GM12878 (cell line): ENCODE measurements at regions of chr7 and their contacts with region 1.

Region 1: GRCh38 chr7:137789215-137789882 is 57.4 kb downstream of the DGKI start:
- DNase-seq: no peak
- ATAC-seq: no peak
- H3K4me3 ChIP-seq: no peak overlapping the region
- H3K27ac ChIP-seq: no peak overlapping the region
- H3K4me1 ChIP-seq: no peaks in the 10 kb centered on the region
- H3K27me3 ChIP-seq: no peaks in the 10 kb centered on the region
- CTCF ChIP-seq: no peak
- EP300 ChIP-seq: no peak
- POLR2A ChIP-seq: no peak
- RAD21 ChIP-seq: no peak

Region 2: DNA sequence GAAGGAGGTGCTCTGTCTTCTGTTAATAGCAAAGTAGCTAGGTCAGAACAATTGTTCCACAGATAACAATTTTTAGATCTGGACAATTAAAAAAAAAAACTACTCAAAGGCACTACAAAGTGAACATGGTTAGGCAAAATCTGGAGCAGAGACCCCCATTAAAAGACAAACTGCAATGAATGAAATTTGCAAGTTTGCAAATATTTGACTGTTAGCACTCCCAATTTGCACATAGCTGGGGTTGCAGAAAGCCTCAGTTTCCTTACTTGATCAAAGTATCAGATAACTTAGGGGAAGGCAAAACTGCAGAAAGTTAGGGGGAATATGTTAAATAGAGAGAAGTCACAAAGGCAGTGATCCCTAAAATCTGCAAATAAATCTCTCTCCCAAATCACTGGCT is 10.8 kb before region 1 on chr7:
- CTCF ChIA-PET with region 1: interaction called, 9 read pairs
- POLR2A ChIA-PET with region 1: interaction called, 8 read pairs
- RAD21 ChIA-PET with region 1: interaction called, 7 read pairs
- SMC1A ChIA-PET with region 1: interaction called, 26 read pairs
- in situ Hi-C with region 1: no loop called
- intact Hi-C with region 1: no loop called
- DNase-seq: no peak
- ATAC-seq: no peak
- H3K4me3 ChIP-seq: no peak overlapping the region
- H3K27ac ChIP-seq: no peak overlapping the region
- H3K4me1 ChIP-seq: no peaks in the 10 kb centered on the region
- H3K27me3 ChIP-seq: no peaks in the 10 kb centered on the region
- CTCF ChIP-seq: no peak
- EP300 ChIP-seq: no peak
- POLR2A ChIP-seq: no peak
- RAD21 ChIP-seq: no peak

Region 3: DNA sequence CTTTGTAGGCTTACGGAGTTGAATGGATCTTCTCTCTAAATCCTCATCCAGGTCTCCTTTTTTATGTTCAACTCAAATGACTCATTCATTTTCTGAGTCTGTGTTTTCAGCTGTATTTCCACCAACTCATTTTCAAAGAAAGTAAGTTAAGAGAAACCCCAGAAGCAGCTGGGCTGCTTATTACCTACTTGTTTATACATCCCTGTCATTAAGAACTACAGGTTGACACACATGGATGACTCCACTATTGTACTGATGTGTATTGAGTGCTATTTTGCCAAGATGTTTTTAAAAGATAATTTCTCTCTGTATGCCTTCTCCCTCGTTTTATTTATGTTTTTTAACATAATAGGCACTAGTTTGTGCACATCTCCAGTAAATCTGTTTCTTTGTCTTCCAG is 15.5 kb after region 1 on chr7:
- CTCF ChIA-PET with region 1: interaction called, 6 read pairs
- POLR2A ChIA-PET with region 1: no interaction called
- RAD21 ChIA-PET with region 1: interaction called, 3 read pairs
- SMC1A ChIA-PET with region 1: interaction called, 11 read pairs
- in situ Hi-C with region 1: no loop called
- intact Hi-C with region 1: no loop called
- DNase-seq: no peak
- ATAC-seq: peak; percentile 67
- H3K4me3 ChIP-seq: no peak overlapping the region
- H3K27ac ChIP-seq: no peak overlapping the region
- H3K4me1 ChIP-seq: no peaks in the 10 kb centered on the region
- H3K27me3 ChIP-seq: no peaks in the 10 kb centered on the region
- CTCF ChIP-seq: no peak
- EP300 ChIP-seq: no peak
- POLR2A ChIP-seq: no peak
- RAD21 ChIP-seq: no peak

Region 4: GRCh38 chr7:137909037-137909436 is 119.7 kb after region 1 on chr7:
- CTCF ChIA-PET with region 1: no interaction called
- POLR2A ChIA-PET with region 1: no interaction called
- RAD21 ChIA-PET with region 1: no interaction called
- SMC1A ChIA-PET with region 1: no interaction called
- in situ Hi-C with region 1: no loop called
- intact Hi-C with region 1: no loop called
- DNase-seq: no peak
- ATAC-seq: no peak
- H3K4me3 ChIP-seq: no peak overlapping the region
- H3K27ac ChIP-seq: no peak overlapping the region
- H3K4me1 ChIP-seq: no peaks in the 10 kb centered on the region
- H3K27me3 ChIP-seq: no peaks in the 10 kb centered on the region
- CTCF ChIP-seq: no peak
- EP300 ChIP-seq: no peak
- POLR2A ChIP-seq: no peak
- RAD21 ChIP-seq: no peak

Region 5: GRCh38 chr7:138049505-138050116 is 260.3 kb after region 1 on chr7:
- CTCF ChIA-PET with region 1: no interaction called
- POLR2A ChIA-PET with region 1: no interaction called
- RAD21 ChIA-PET with region 1: no interaction called
- SMC1A ChIA-PET with region 1: no interaction called
- in situ Hi-C with region 1: no loop called
- intact Hi-C with region 1: no loop called
- DNase-seq: no peak
- ATAC-seq: no peak
- H3K4me3 ChIP-seq: no peak overlapping the region
- H3K27ac ChIP-seq: no peak overlapping the region
- H3K4me1 ChIP-seq: no peaks in the 10 kb centered on the region
- H3K27me3 ChIP-seq: no peaks in the 10 kb centered on the region
- CTCF ChIP-seq: no peak
- EP300 ChIP-seq: no peak
- POLR2A ChIP-seq: no peak
- RAD21 ChIP-seq: no peak